Posterior vena cava (tissue), 2 donors: ENCODE measurements at regions of chr19 and their contacts with region 1.

Region 1: DNA sequence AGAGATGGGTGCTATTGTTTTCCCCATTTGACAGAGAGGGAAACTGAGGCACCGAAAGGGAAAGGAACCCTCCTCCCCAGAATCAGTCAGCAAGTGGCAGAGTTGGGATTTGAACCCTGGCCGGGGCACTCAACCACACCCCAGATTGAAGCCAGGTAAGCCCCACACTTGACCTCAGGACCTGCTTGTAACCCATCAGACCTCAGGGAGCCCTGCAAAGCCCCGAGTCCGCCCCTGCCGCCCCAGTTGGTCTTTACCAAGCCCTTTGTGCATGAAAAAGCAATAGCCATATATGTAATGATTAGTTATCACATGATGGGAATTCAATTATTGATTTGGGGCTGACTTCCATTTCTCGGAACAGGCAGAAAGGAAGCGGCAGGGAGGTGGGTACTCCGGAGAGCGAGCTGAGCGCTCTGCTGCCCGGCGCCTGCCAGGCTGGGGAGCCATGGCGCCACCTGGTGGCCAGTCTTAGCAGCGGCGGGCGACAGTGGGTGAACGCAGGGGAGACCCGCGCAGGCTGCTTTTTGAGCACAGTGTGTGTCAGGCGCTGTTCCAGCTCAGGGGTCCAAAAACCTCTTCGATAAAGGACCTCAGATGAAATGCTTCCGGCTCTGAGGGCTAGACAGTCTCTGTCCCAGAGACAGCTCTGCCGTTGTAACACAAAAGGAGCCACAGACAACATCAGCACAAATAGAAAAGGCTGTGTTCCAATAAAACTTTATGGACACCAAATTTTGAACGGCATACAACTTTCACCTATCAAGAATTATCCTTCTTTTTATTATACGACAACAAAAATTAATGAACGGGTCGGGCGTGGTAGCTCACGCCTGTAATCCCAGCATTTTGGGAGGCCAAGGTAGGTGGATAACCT is 82.9 kb upstream of the CACNA1A start:
- DNase-seq: peak; percentile 91

Region 2: GRCh38 chr19:13277104-13277809 is 311.9 kb before region 1 on chr19:
- intact Hi-C with region 1: loop called (anchors 2 to 5 kb)
- DNase-seq: no peak

Region 3: DNA sequence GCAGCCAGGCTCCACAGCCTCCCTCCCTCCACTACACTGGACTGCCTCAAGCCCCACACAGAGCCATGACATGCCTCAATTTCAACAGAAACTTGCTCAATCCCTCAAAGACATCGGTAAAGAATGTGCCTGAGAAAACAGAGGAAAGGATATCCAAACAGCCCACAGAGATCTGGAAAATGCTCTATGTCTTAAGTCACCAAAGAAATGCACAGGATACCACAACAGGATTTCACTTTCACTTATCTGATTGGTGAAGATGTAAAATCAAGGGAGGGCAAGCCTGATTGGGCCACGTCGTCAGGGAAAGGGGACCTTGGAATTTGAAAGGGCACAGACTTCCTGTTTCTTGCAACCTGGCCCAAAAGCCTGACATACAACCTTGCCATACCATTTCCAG is 97.1 kb before region 1 on chr19:
- intact Hi-C with region 1: no loop called
- DNase-seq: no peak